Activated CD8-positive, alpha-beta memory T cell treated with anti-CD3 and anti-CD28 coated beads, Interleukin-2, amount 10 ng/mL, durations not matched to agents 7 days and 5 days (primary cell): ENCODE measurements at regions of chr11 and their contacts with region 1.

Region 1: GRCh38 chr11:447923-448731 is 2.0 kb upstream of the PTDSS2 start:
- DNase-seq: peak; percentile 96
- ATAC-seq: peak; percentile 74
- H3K4me3 Mint-ChIP-seq: peak overlapping the region; percentile 90
- H3K27ac Mint-ChIP-seq: peak overlapping the region; percentile 98
- H3K4me1 Mint-ChIP-seq: peaks cover 27% of the 10 kb centered on the region
- H3K27me3 Mint-ChIP-seq: peaks cover 4% of the 10 kb centered on the region

Region 2: GRCh38 chr11:304915-305843 is 142.9 kb before region 1 on chr11:
- CTCF ChIA-PET with region 1: interaction called, 26 read pairs
- DNase-seq: peak; percentile 81
- ATAC-seq: no peak
- H3K4me3 Mint-ChIP-seq: no peak overlapping the region
- H3K27ac Mint-ChIP-seq: no peak overlapping the region
- H3K4me1 Mint-ChIP-seq: peaks cover 46% of the 10 kb centered on the region
- H3K27me3 Mint-ChIP-seq: peaks cover 17% of the 10 kb centered on the region

Region 3: GRCh38 chr11:334264-334994 is 113.7 kb before region 1 on chr11:
- CTCF ChIA-PET with region 1: no interaction called
- DNase-seq: no peak
- ATAC-seq: no peak
- H3K4me3 Mint-ChIP-seq: no peak overlapping the region
- H3K27ac Mint-ChIP-seq: no peak overlapping the region
- H3K4me1 Mint-ChIP-seq: peaks cover 35% of the 10 kb centered on the region
- H3K27me3 Mint-ChIP-seq: peaks cover 20% of the 10 kb centered on the region

Region 4: GRCh38 chr11:363948-364761 is 84.0 kb before region 1 on chr11:
- CTCF ChIA-PET with region 1: interaction called, 10 read pairs
- DNase-seq: peak; percentile 67
- ATAC-seq: peak; percentile 75
- H3K4me3 Mint-ChIP-seq: no peak overlapping the region
- H3K27ac Mint-ChIP-seq: peak overlapping the region; percentile 13
- H3K4me1 Mint-ChIP-seq: peaks cover 13% of the 10 kb centered on the region
- H3K27me3 Mint-ChIP-seq: peaks cover 33% of the 10 kb centered on the region

Region 5: GRCh38 chr11:406978-407739 is 41.0 kb before region 1 on chr11:
- CTCF ChIA-PET with region 1: interaction called, 95 read pairs
- DNase-seq: peak; percentile 95
- ATAC-seq: peak; percentile 91
- H3K4me3 Mint-ChIP-seq: peak overlapping the region; percentile 9
- H3K27ac Mint-ChIP-seq: peak overlapping the region; percentile 49
- H3K4me1 Mint-ChIP-seq: peaks cover 13% of the 10 kb centered on the region
- H3K27me3 Mint-ChIP-seq: no peaks in the 10 kb centered on the region

Region 6: DNA sequence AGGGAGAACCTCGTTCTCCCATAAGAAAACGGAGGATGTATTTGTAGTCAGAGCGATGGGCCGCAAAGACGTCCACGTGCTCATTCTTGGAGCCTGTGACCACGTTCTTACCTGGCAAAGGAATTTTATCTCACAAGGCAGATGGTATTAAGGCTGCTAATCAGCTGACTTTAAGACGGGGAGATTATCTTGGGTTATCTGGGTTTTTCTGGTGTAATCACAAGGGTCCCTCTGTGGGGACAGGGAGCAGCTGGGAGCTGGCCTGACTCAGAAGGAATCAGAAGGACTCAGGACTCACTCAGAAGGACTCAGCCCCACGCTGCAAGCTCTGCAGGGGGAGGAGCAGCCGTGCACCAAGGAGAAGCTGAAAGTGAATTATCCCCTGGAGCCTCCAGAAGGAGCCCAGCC is 25.9 kb before region 1 on chr11:
- CTCF ChIA-PET with region 1: interaction called, 74 read pairs
- DNase-seq: no peak
- ATAC-seq: no peak
- H3K4me3 Mint-ChIP-seq: no peak overlapping the region
- H3K27ac Mint-ChIP-seq: no peak overlapping the region
- H3K4me1 Mint-ChIP-seq: peaks cover 3% of the 10 kb centered on the region
- H3K27me3 Mint-ChIP-seq: no peaks in the 10 kb centered on the region

Region 7: DNA sequence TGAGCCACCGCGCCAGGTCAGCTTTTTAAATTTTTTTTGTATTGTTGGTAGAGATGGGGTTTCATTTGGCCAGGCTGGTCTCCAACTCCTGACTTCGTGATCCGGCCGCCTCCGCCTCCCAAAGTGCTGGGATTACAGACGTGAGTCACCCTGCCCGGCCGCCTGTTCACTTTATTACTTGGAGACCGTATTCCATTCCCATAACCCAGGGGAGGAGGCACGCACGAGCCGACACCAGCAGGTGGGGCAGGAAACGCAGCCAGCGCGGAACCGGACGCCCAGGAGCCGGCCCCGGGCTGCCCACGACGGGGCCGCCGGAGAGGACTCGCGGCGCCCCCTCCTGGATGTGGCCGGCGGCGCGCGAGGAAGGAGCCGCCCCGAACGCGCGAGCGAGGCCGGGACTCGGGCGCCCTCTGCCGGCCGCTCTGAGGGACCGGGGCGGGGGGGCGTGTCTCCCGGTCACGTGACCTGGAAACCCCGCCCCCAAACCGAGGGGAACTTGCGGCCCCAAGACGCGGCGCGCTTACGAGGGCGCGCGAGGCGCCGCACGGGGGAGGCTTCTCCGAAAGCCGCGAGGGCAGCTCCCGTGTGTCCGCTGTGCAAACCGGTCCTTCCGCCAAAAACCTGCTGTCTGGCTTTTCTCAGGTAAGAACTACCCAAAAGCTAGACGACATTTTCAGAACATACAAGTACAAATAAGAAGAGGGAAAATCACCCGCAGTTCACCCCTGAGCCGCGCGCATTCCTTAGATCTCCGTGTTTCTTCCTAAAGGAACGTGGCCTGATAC is 70.5 kb after region 1 on chr11:
- CTCF ChIA-PET with region 1: interaction called, 48 read pairs
- DNase-seq: peak; percentile 90
- ATAC-seq: peak; percentile 97
- H3K4me3 Mint-ChIP-seq: peak overlapping the region; percentile 58
- H3K27ac Mint-ChIP-seq: peak overlapping the region; percentile 64
- H3K4me1 Mint-ChIP-seq: peaks cover 6% of the 10 kb centered on the region
- H3K27me3 Mint-ChIP-seq: no peaks in the 10 kb centered on the region